ENCODE measurements at regions of chr16 and their contacts with region 1.

Region 1: DNA sequence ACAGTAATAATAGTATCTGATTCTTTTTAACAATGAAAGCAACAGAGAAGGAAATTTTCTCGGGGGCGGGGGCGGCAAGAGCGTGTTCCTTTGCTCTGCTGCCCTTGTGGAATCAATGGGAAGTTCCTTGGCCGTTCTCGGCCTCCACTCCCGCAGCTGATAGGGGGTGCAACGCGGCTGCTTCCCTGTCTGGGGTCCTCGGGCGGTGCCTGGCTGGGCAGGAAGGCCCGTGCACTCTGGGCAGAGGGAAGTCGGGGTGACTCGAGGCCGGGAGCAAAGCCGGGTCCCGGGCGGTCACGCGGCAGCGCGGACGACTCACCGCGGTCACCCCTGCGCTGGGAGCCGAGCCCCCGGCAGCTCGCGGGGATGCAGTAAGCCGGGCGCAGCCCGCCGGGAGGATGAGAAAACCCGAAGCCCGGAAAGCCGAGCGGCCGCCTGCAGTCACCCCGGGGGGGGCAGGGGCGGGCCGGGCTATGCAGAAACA is 2.5 kb downstream of the TUBB3 start:
- DNase-seq: no peak
- ATAC-seq: no peak
- H3K4me3 Mint-ChIP-seq: no peak overlapping the region
- H3K27ac Mint-ChIP-seq: no peak overlapping the region
- H3K4me1 Mint-ChIP-seq: peaks cover 25% of the 10 kb centered on the region
- H3K27me3 Mint-ChIP-seq: peaks cover 17% of the 10 kb centered on the region
- CTCF ChIP-seq: no peak

Region 2: DNA sequence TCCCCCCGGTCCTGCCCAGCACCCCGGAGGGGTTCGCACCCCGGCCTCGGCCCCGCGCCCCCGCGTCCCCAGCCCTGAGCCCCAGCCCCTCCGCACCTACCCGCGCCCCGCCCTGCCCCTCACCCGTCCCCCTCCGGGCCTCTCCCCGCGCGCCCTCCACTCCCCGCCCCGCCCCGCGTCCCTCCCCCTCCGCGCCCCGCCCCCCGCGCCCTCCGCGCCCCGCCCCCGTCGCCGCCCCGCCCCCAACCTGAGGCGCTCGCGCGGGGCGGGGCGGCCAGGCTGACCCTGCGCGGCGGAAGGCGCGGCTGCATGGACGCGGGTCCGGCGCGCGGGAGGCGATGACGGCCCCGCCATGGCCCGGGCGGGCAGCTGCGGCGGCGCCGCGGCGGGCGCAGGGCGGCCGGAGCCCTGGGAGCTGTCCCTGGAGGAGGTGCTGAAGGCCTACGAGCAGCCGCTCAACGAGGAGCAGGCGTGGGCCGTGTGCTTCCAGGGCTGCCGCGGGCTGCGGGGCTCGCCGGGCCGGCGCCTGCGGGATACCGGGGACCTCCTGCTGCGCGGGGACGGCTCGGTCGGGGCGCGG is 97.3 kb before region 1 on chr16 and contains the start of gene SPIRE2:
- CTCF ChIA-PET with region 1: no interaction called
- POLR2A ChIA-PET with region 1: no interaction called
- intact Hi-C with region 1: loop called (anchors 1 kb)
- DNase-seq: peak; percentile 71
- ATAC-seq: peak; percentile 98
- H3K4me3 Mint-ChIP-seq: peak within 1 kb of the TSS; percentile 52
- H3K27ac Mint-ChIP-seq: no peak within 1 kb of the TSS
- H3K4me1 Mint-ChIP-seq: peaks cover 4% of the 10 kb centered on the region
- H3K27me3 Mint-ChIP-seq: peaks cover 26% of the 10 kb centered on the region
- CTCF ChIP-seq: no peak
- total RNA-seq, gene SPIRE2: 0.46 and 1.2 TPM in 2 replicates

Region 3: GRCh38 chr16:89972244-89973234 is 46.9 kb after region 1 on chr16:
- CTCF ChIA-PET with region 1: no interaction called
- POLR2A ChIA-PET with region 1: interaction called, 3 read pairs
- intact Hi-C with region 1: loop called (anchors 1 kb)
- DNase-seq: peak; percentile 94
- ATAC-seq: peak; percentile 92
- H3K4me3 Mint-ChIP-seq: peak overlapping the region; percentile 99
- H3K27ac Mint-ChIP-seq: peak overlapping the region; percentile 94
- H3K4me1 Mint-ChIP-seq: peaks cover 41% of the 10 kb centered on the region
- H3K27me3 Mint-ChIP-seq: no peaks in the 10 kb centered on the region
- CTCF ChIP-seq: no peak

Region 4: DNA sequence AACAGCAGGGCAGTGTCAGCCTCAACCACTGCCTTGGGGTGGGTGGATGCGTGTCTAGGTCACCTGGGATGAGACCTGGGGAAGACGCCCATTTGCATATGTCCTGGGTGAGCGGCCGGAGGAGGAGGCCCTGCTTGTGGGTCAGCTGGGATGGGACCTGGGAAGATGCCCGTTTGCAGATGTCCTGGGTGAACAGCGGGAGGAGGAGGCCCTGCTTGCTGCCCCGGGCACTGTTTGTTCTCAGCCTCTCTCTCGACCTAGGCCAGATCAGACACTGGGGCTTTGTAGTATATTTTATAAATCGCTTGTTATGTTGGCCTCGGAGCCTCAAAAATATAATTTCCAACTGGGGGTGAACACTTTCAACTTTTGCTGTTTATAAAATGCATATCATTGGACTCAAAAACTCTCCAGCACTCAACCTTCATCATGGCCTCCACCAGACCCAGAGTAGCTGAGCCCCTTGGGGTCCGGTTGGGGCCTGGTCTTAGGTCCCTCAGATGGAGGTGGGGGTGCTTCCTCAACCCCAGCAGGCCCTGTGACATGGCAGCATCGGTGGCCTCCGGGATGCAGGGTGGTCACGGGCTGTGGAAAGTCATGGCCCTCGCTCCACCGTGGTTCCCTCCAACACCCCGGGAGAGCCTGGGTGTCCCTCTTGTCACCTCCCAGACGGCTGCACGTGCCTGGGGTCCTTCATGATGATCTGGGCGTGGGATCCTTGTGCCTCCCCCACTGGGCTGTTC is 76.3 kb after region 1 on chr16:
- CTCF ChIA-PET with region 1: no interaction called
- POLR2A ChIA-PET with region 1: no interaction called
- intact Hi-C with region 1: no loop called
- DNase-seq: no peak
- ATAC-seq: no peak
- H3K4me3 Mint-ChIP-seq: no peak overlapping the region
- H3K27ac Mint-ChIP-seq: no peak overlapping the region
- H3K4me1 Mint-ChIP-seq: peaks cover 7% of the 10 kb centered on the region
- H3K27me3 Mint-ChIP-seq: no peaks in the 10 kb centered on the region
- CTCF ChIP-seq: no peak